ENCODE measurements at regions of chr9 and their contacts with region 1.

Region 1: DNA sequence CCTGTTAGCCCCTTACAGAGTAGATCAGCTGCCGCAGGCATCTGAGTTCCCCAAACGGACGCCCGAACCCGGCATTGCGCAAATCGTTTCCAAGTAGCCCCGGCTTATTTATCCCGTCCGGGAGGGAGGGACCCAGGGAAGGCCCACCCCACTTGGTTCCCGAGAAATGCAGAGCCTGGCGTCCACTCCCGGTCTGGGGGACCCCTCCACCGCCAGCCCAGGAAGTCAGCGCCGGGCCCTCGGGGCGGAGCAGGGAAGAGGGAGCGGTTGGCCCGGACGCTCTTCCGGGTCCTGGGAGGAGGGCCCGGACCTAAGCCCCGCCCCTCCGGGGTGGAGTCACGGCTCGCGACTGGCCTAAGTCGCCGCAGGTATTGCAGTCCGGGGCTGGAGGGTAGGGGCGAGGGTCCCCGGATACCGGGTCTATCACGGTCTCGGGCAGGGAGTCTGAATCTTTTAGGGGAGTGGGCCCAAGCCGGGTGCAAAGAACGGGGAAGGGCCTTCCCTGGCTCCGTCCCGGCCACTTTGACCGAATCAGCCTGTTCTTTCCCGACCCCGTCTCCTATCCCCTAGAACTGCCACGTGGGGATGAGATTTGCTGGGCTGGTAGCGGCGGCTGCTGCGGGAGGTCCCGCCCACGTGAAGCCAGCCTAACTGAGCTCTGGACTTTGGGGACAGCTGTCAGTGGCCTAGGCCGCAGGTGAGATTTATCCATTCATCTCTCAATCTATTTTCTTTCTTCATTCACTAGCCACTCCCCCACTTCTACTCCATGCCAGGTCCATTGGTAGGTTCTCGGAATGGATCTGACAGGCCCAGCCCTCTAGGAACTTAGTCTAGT is at the start of gene RABEPK:
- DNase-seq: peak; percentile 94
- H3K4me3 ChIP-seq: peak within 1 kb of the TSS; percentile 78 to 91 (median 80)
- H3K27ac ChIP-seq: peak within 1 kb of the TSS; percentile 81
- H3K4me1 ChIP-seq: peaks cover 6% of the 10 kb centered on the region
- H3K27me3 ChIP-seq: peaks cover 2 to 3% of the 10 kb centered on the region in 2 experiments
- CTCF ChIP-seq: no peak
- POLR2A ChIP-seq: peak; percentile 93
- total RNA-seq, gene RABEPK: 18.2 and 19.1 TPM in 2 replicates

Region 2: GRCh38 chr9:124894741-124895170 is 305.7 kb before region 1 on chr9:
- CTCF ChIA-PET with region 1: no interaction called
- POLR2A ChIA-PET with region 1: no interaction called
- dilution Hi-C with region 1: no loop called
- intact Hi-C with region 1: no loop called
- DNase-seq: peak; percentile 57
- H3K4me3 ChIP-seq: no peak overlapping the region
- H3K27ac ChIP-seq: no peak overlapping the region
- H3K4me1 ChIP-seq: no peaks in the 10 kb centered on the region
- H3K27me3 ChIP-seq: no peaks in the 10 kb centered on the region
- CTCF ChIP-seq: peak; percentile 43 to 58
- POLR2A ChIP-seq: no peak

Region 3: GRCh38 chr9:125183054-125183453 is 17.4 kb before region 1 on chr9:
- CTCF ChIA-PET with region 1: no interaction called
- POLR2A ChIA-PET with region 1: no interaction called
- dilution Hi-C with region 1: no loop called
- intact Hi-C with region 1: loop called (anchors 2 kb)
- DNase-seq: peak; percentile 77
- H3K4me3 ChIP-seq: no peak overlapping the region
- H3K27ac ChIP-seq: peak overlapping the region; percentile 1
- H3K4me1 ChIP-seq: peaks cover 15% of the 10 kb centered on the region
- H3K27me3 ChIP-seq: no peaks in the 10 kb centered on the region
- CTCF ChIP-seq: no peak
- POLR2A ChIP-seq: no peak

Region 4: DNA sequence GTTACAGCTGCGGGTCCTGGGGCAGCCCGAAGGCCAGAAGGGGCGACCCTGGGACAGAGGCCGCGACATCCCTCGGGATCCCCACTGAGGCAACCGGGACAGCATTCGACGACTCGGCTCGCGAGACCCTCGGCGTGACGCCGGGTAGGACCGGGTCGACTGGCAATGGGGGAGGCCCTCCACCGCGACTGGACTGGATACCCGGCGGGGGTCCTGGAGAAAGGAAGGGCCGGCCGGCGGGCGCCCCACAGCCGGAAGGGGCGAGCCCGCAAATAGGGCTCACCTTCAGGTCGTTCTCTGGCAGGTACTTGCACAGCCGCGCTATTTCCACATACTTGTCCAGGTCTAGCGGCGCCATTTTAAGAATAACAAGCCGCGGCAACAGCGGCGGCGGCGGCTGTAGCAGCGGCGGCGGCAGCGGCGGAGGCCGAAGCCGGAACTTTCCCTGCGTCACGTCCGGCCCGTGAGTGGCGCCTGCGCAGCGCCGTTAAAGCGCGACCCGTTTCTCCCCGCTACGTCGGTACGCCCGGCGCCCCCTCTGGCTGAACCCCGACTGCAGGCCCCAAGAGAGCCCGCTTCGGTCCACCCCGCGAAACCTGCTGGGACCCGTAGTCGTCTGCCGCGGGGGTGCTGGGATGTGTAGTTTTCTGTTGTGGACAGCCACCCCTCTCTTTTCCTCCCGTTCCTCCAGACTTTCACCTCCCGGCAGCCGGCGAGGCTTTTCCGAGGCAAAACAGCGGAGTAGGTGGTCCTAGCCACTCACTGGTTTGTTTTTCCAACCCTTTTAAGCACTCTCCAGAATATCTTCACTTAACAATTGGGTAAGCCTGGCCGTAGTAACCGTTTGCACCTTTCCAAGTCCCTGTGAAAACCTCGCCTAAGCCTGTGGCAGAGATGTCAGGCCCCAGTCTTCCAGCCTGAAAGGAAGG is 10.8 kb before region 1 on chr9 and contains the start of gene PPP6C:
- CTCF ChIA-PET with region 1: no interaction called
- POLR2A ChIA-PET with region 1: no interaction called
- dilution Hi-C with region 1: no loop called
- intact Hi-C with region 1: loop called (anchors 1 kb)
- DNase-seq: peak; percentile 98
- H3K4me3 ChIP-seq: peak within 1 kb of the TSS; percentile 70 to 90 (median 78)
- H3K27ac ChIP-seq: peak within 1 kb of the TSS; percentile 66
- H3K4me1 ChIP-seq: peaks cover 7% of the 10 kb centered on the region
- H3K27me3 ChIP-seq: no peaks in the 10 kb centered on the region
- CTCF ChIP-seq: peak; percentile 76 to 88
- POLR2A ChIP-seq: peak; percentile 91
- total RNA-seq, gene PPP6C: 42.1 and 42.6 TPM in 2 replicates

Region 5: GRCh38 chr9:125241000-125241862 is 40.8 kb after region 1 on chr9 and contains the start of gene HSPA5:
- CTCF ChIA-PET with region 1: interaction called, 4 read pairs
- POLR2A ChIA-PET with region 1: interaction called, 6 read pairs
- dilution Hi-C with region 1: no loop called
- intact Hi-C with region 1: loop called (anchors 1 kb)
- DNase-seq: peak; percentile 100
- H3K4me3 ChIP-seq: peak within 1 kb of the TSS; percentile 77 to 97 (median 96)
- H3K27ac ChIP-seq: peak within 1 kb of the TSS; percentile 89
- H3K4me1 ChIP-seq: peaks cover 43% of the 10 kb centered on the region
- H3K27me3 ChIP-seq: no peaks in the 10 kb centered on the region
- CTCF ChIP-seq: peak in 1 of 2 donors; percentile 22
- POLR2A ChIP-seq: peak; percentile 100
- total RNA-seq, gene HSPA5: 514 and 538 TPM in 2 replicates

Measured in endothelial cell of umbilical vein (primary cell).